ENCODE measurements at regions of chr2 and their contacts with region 1.

Region 1: GRCh38 chr2:145931781-145932352 is 1411.9 kb upstream of the ZEB2 start:
- DNase-seq: peak; percentile 90
- H3K4me3 ChIP-seq: peak overlapping the region; percentile 16
- H3K27ac ChIP-seq: no peak overlapping the region
- H3K4me1 ChIP-seq: peaks cover 27% of the 10 kb centered on the region
- H3K27me3 ChIP-seq: no peaks in the 10 kb centered on the region
- CTCF ChIP-seq: no peak

Region 2: DNA sequence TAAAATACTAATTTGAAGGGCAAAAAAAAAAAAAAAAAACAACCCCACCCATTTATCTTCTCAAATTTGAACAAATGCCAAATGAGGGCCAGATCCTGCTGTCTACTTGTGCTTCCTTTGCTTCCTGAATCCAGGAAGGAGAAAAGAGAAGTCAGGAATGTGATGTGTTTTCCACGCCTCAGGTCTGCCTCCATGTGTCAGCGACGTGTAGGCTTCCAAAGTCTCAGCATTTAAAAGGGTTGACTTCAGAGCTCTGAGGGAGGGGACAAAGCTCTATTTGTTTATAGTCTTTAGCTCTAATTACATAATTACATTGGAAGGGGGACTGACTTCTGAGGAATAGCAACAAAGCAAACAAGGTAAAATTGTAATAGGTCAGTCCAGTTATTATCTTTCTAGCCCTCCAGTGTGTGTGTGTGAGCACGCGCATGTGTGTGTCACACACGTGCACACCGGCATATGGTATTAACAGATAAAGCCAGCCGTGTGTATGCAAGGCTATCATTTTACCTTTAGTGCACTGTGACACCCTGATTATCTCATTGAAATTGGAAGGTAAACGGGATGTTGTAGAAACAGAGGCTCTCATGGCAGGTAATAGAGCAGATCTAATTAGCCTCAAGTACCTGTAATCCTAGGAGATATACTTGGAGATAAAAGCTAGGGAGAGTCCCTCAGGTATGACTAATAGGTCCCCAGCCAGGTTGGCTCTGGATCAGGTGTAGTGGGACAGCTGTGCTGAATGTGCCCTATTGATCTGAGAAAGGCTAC is 500.5 kb before region 1 on chr2:
- CTCF ChIA-PET with region 1: no interaction called
- POLR2A ChIA-PET with region 1: no interaction called
- intact Hi-C with region 1: no loop called
- DNase-seq: peak; percentile 18
- H3K4me3 ChIP-seq: no peak overlapping the region
- H3K27ac ChIP-seq: no peak overlapping the region
- H3K4me1 ChIP-seq: no peaks in the 10 kb centered on the region
- H3K27me3 ChIP-seq: no peaks in the 10 kb centered on the region
- CTCF ChIP-seq: no peak

Region 3: GRCh38 chr2:146135245-146135644 is 203.4 kb after region 1 on chr2:
- CTCF ChIA-PET with region 1: no interaction called
- POLR2A ChIA-PET with region 1: no interaction called
- intact Hi-C with region 1: no loop called
- DNase-seq: no peak
- H3K4me3 ChIP-seq: no peak overlapping the region
- H3K27ac ChIP-seq: no peak overlapping the region
- H3K4me1 ChIP-seq: no peaks in the 10 kb centered on the region
- H3K27me3 ChIP-seq: no peaks in the 10 kb centered on the region
- CTCF ChIP-seq: no peak

Region 4: GRCh38 chr2:146239392-146240135 is 307.7 kb after region 1 on chr2:
- CTCF ChIA-PET with region 1: no interaction called
- POLR2A ChIA-PET with region 1: no interaction called
- intact Hi-C with region 1: loop called (anchors 10 kb)
- DNase-seq: peak; percentile 27
- H3K4me3 ChIP-seq: no peak overlapping the region
- H3K27ac ChIP-seq: no peak overlapping the region
- H3K4me1 ChIP-seq: no peaks in the 10 kb centered on the region
- H3K27me3 ChIP-seq: peaks cover 87% of the 10 kb centered on the region
- CTCF ChIP-seq: no peak